ENCODE measurements at regions of chr16 and their contacts with region 1.

Region 1: GRCh38 chr16:57519796-57520360 is 16.5 kb downstream of the CCDC102A start:
- DNase-seq: no peak
- H3K4me3 ChIP-seq: no peak overlapping the region
- H3K27me3 ChIP-seq: no peaks in the 10 kb centered on the region
- CTCF ChIP-seq: peak; percentile 99

Region 2: GRCh38 chr16:57204675-57205074 is 315.2 kb before region 1 on chr16:
- CTCF ChIA-PET with region 1: no interaction called
- POLR2A ChIA-PET with region 1: no interaction called
- DNase-seq: no peak
- H3K4me3 ChIP-seq: no peak overlapping the region
- H3K27me3 ChIP-seq: no peaks in the 10 kb centered on the region
- CTCF ChIP-seq: no peak

Region 3: DNA sequence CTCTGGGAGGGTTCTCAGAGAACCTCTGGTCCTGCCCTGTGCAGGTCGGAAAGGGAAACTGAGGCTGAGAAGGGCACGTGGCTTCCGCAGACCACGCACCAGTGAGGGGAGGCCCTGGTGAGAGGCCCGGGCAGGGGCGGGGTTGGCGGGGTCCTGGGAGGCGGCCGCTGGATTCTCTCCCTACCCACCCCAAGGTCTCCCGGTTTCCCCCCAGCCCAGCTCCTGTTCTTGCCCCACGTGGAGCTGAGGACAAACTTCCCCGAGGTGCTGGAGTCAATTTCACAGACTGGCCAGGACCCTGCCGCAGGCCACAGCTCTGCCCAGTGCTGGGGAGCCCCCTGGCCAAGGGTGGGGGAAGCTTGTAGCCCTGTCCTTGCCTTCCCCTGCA is 103.8 kb before region 1 on chr16:
- CTCF ChIA-PET with region 1: interaction called, 219 read pairs
- POLR2A ChIA-PET with region 1: no interaction called
- DNase-seq: no peak
- H3K4me3 ChIP-seq: no peak overlapping the region
- H3K27me3 ChIP-seq: peaks cover 4% of the 10 kb centered on the region
- CTCF ChIP-seq: no peak

Region 4: DNA sequence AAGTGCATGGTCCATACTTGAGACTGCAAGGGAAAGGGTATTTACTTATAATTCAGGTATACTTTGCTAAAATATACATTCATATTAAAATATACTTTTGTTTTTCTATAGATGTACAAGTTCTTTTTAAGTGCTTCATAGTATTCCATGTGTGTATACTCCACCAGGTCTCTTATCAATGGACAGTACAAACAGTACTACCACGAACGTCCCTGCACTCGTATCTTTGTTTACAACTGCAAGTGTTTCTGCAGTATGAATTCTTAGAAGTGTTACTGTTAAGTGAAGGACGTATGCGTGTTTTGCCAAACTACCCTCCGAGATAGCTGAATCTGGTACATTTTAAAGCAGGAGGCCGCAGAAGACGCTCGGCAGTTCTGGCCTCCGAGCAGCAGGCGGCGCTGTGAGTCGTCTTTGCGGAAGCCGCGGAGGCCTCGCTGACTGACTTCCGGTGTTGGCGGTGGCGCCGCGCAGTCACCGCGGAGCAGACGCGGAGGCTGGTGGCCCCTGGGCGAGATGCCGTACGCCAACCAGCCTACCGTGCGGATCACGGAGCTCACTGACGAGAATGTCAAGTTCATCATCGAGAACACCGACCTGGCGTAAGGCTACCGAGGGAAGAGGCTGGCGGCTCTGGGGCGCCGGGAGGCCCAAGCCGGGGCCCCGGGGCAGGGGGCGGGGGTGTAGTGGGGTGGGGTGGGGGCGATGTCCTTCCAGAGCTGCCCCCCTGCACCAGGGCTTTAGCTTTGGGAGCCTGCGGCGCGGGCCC is 57.5 kb before region 1 on chr16 and contains the start of gene POLR2C:
- CTCF ChIA-PET with region 1: interaction called, 18 read pairs
- POLR2A ChIA-PET with region 1: no interaction called
- DNase-seq: no peak
- H3K4me3 ChIP-seq: peak within 1 kb of the TSS; percentile 93
- H3K27me3 ChIP-seq: no peaks in the 10 kb centered on the region
- CTCF ChIP-seq: peak; percentile 99
- polyA plus RNA-seq, gene POLR2C: 127 and 176 TPM in 2 replicates

Region 5: DNA sequence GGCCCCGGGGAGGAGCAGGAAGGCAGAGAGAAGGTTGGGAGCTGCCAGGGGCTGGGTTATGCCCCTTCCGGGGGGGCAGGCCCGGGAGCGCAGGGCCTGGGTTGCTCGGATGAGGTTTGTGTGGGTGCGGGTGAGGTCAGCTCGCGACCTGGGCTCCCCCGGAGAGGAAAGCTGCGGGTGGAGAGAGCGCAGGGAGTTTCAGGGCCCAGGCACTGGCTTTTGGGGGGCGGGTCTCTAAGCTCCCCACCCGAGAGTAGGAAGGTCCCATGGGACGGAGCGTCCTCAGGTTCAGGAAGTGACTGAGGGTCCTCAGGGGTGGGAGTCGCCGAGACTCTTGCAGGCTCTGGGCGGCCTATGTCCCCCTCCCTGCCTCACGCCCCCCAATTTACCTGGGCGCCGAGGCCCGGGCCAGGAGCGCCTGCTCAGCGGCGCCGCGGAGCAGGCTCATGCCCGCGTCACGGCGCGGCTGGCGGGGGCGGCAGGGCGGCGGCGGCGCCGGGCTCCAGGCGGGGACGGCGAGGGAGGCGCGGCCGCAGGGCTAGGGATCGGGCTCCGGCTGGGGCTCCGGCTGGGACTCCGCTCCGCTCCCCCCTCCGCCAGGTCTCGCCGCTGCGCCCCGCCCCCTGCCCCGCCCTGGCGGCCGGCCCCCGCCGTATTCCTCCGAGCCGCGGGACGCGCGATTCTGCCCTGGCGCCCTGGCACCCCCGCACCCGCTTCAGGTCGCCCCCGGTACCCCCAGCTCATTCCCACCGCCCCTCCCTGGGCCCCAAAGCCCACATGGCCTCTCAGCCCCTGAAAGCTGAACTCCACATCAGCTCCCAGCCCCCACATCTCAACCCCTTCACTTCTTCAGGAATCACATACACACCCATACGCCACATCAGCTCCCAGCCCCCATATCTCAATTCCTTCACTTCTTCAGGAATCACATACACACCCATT is 33.7 kb before region 1 on chr16 and contains the start of gene DOK4:
- CTCF ChIA-PET with region 1: interaction called, 25 read pairs
- POLR2A ChIA-PET with region 1: no interaction called
- DNase-seq: no peak
- H3K4me3 ChIP-seq: peak within 1 kb of the TSS; percentile 83
- H3K27me3 ChIP-seq: no peaks in the 10 kb centered on the region
- CTCF ChIP-seq: no peak
- polyA plus RNA-seq, gene DOK4: 28.3 and 40.0 TPM in 2 replicates

Region 6: GRCh38 chr16:57753771-57754707 is 234.2 kb after region 1 on chr16:
- CTCF ChIA-PET with region 1: no interaction called
- POLR2A ChIA-PET with region 1: no interaction called
- DNase-seq: no peak
- H3K4me3 ChIP-seq: no peak overlapping the region
- H3K27me3 ChIP-seq: no peaks in the 10 kb centered on the region
- CTCF ChIP-seq: no peak